ENCODE measurements at regions of chr10 and their contacts with region 1.

Region 1: GRCh38 chr10:48656241-48656913 is 28.3 kb upstream of the WDFY4 start:
- DNase-seq: peak; percentile 83 to 96 (median 92)
- H3K4me3 ChIP-seq: peak overlapping the region; percentile 44
- H3K27ac ChIP-seq: no peak overlapping the region
- H3K4me1 ChIP-seq: no peaks in the 10 kb centered on the region
- H3K27me3 ChIP-seq: no peaks in the 10 kb centered on the region
- CTCF ChIP-seq: peak; percentile 92 to 99 (median 96)
- EP300 ChIP-seq: no peak
- POLR2A ChIP-seq: no peak

Region 2: DNA sequence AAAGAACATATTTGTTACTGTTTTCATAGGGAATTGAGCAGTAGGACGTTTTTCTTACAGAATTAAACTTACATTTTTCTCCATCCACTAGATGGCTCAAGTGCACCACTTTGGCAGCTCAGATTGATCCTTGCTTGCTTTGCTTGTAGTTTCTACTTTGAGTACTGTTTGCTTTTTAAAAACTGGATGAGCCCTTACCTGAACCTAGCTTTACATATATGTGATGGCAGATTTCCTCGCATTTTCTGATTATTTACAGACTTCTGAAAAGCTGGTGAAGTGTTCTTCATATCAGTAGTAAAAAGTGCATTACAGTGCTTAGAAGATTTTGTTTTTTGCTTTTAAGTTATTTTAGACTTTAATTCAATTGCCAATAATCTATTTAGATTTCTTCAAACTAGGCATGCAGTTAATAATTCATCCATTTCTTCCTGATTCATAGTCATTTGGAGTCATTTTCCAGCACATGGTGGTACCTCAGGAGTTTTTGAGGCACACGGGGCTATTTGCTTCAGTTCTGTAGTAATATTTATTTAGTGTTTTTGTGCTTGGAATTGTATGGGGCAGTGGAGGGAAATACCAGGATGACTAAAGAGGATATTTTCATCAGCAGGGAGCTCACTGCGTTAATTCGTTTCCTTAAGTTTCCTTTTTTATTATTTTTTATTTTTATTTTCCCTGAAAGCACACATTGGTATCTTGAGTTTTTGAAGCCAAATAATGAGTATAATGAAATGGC is 292.6 kb before region 1 on chr10:
- intact Hi-C with region 1: loop called in 2 of 4 experiments (anchors 2 to 5 kb)
- DNase-seq: peak in 3 of 5 donors; percentile 15 to 45 (median 36)
- H3K4me3 ChIP-seq: no peak overlapping the region
- H3K27ac ChIP-seq: no peak overlapping the region
- H3K4me1 ChIP-seq: peaks cover 7% of the 10 kb centered on the region
- H3K27me3 ChIP-seq: no peaks in the 10 kb centered on the region
- CTCF ChIP-seq: peak; percentile 41 to 70 (median 61)
- EP300 ChIP-seq: no peak
- POLR2A ChIP-seq: no peak

Region 3: GRCh38 chr10:48551861-48552591 is 104.4 kb before region 1 on chr10:
- intact Hi-C with region 1: loop called (anchors 1 to 10 kb)
- DNase-seq: peak in 4 of 5 donors; percentile 29 to 50 (median 46)
- H3K4me3 ChIP-seq: no peak overlapping the region
- H3K27ac ChIP-seq: no peak overlapping the region
- H3K4me1 ChIP-seq: peaks cover 2% of the 10 kb centered on the region
- H3K27me3 ChIP-seq: no peaks in the 10 kb centered on the region
- CTCF ChIP-seq: peak in 2 of 3 donors; percentile 34 to 78
- EP300 ChIP-seq: no peak
- POLR2A ChIP-seq: no peak